H1 (cell line): ENCODE measurements at regions of chr21 and their contacts with region 1.

Region 1: DNA sequence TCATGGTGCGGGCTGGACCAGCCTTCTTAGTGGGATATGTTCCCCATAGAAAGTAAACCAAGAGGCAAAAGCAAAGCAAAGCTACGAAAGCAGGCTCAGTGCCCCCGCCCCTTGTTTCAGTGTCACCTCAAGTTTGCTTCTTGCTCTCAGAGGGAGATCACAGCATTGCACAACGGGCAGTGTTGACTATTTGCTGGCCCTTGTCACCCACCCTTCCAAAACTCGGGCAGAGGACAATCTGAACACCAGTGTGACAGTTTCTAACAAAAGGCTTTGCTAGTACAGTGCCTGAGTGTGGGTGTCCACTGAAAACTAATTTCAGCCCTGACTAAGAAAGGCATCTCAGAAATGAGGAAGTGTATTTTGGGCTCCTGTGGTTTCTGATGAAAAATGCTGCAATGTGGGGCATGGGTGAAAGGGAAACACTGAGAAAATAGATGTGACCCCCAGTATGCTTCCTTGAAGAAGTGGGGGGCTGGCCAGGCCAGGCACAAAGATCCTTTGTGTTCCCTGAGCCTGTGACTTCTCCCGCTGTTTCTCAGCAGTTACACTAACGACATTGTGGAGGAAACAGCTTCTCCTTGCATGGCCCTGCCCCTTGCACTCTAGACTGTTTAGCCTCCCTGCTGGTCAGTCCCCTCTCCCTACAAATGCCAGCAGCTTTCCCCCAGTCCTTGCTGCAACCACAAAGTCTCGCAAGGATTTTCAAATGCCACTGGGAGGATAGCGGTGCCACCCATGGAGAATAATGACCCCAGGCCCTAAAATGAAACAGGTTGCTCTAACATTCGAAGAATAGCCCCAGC is 33.3 kb upstream of the KCNE1 start:
- DNase-seq: no peak
- H3K4me3 ChIP-seq: no peak overlapping the region
- H3K27ac ChIP-seq: no peak overlapping the region
- H3K4me1 ChIP-seq: peaks cover 0 to 5% (median 2%) of the 10 kb centered on the region in 4 experiments; a peak in 4 of 7 replicates
- H3K27me3 ChIP-seq: no peaks in the 10 kb centered on the region; a peak in 1 of 7 replicates
- CTCF ChIP-seq: no peak
- EP300 ChIP-seq: no peak
- POLR2A ChIP-seq: no peak
- RAD21 ChIP-seq: no peak

Region 2: GRCh38 chr21:34517491-34518245 is 27.6 kb before region 1 on chr21:
- CTCF ChIA-PET with region 1: interaction called, 16 read pairs
- POLR2A ChIA-PET with region 1: no interaction called
- DNase-seq: no peak
- H3K4me3 ChIP-seq: no peak overlapping the region
- H3K27ac ChIP-seq: no peak overlapping the region
- H3K4me1 ChIP-seq: peaks cover 0 to 4% (median 0%) of the 10 kb centered on the region in 4 experiments; a peak in 2 of 7 replicates
- H3K27me3 ChIP-seq: no peaks in the 10 kb centered on the region
- CTCF ChIP-seq: peak; percentile 32 to 76 (median 63)
- EP300 ChIP-seq: no peak
- POLR2A ChIP-seq: no peak
- RAD21 ChIP-seq: peak; percentile 53 to 68

Region 3: DNA sequence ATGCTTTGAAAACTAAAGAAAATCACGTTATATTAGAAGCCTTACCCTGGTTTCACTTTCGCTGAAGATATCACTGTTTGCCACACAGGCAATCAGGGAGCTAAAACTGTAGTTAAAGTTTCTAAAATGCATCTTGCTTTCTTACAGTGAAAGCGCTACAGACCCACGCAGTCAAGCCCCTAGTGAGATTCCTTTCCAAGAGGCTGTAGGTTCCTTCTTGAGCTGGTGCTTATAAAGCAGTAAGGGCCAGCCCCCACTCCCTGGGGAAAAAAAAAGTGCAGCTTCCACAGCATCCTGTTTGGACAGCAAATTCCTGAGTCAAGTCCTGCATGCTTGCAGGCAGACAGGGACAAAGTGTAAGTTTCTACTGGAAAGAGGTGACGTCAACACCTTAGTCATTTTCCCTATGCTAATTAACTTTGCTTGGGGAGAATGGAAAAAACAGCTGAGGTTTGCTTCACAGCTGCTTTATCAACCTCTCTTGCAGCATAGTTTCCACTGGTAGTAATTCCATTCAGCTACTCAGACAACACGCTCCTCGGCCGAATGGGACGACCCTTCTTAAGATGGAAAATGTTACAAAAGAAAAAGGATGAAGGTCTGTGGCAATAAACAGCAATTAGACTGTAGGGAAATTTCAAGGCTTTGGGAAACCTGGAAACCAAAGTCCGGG is 18.5 kb before region 1 on chr21:
- CTCF ChIA-PET with region 1: interaction called, 16 read pairs
- POLR2A ChIA-PET with region 1: interaction called, 6 read pairs
- DNase-seq: no peak
- H3K4me3 ChIP-seq: no peak overlapping the region
- H3K27ac ChIP-seq: no peak overlapping the region
- H3K4me1 ChIP-seq: peaks cover 8 to 19% (median 14%) of the 10 kb centered on the region in 4 experiments
- H3K27me3 ChIP-seq: no peaks in the 10 kb centered on the region; a peak in 2 of 7 replicates
- CTCF ChIP-seq: no peak
- EP300 ChIP-seq: no peak
- POLR2A ChIP-seq: no peak
- RAD21 ChIP-seq: no peak

Region 4: GRCh38 chr21:34559089-34559631 is 13.9 kb after region 1 on chr21:
- CTCF ChIA-PET with region 1: interaction called, 12 read pairs
- POLR2A ChIA-PET with region 1: no interaction called
- DNase-seq: no peak
- H3K4me3 ChIP-seq: no peak overlapping the region
- H3K27ac ChIP-seq: no peak overlapping the region
- H3K4me1 ChIP-seq: no peaks in the 10 kb centered on the region
- H3K27me3 ChIP-seq: no peaks in the 10 kb centered on the region
- CTCF ChIP-seq: no peak
- EP300 ChIP-seq: no peak
- POLR2A ChIP-seq: no peak
- RAD21 ChIP-seq: no peak

Region 5: GRCh38 chr21:34702341-34703170 is 157.3 kb after region 1 on chr21:
- CTCF ChIA-PET with region 1: no interaction called
- POLR2A ChIA-PET with region 1: no interaction called
- DNase-seq: no peak
- H3K4me3 ChIP-seq: no peak overlapping the region
- H3K27ac ChIP-seq: no peak overlapping the region
- H3K4me1 ChIP-seq: no peaks in the 10 kb centered on the region; a peak in 2 of 7 replicates
- H3K27me3 ChIP-seq: no peaks in the 10 kb centered on the region
- CTCF ChIP-seq: no peak
- EP300 ChIP-seq: no peak
- POLR2A ChIP-seq: no peak
- RAD21 ChIP-seq: no peak

Region 6: DNA sequence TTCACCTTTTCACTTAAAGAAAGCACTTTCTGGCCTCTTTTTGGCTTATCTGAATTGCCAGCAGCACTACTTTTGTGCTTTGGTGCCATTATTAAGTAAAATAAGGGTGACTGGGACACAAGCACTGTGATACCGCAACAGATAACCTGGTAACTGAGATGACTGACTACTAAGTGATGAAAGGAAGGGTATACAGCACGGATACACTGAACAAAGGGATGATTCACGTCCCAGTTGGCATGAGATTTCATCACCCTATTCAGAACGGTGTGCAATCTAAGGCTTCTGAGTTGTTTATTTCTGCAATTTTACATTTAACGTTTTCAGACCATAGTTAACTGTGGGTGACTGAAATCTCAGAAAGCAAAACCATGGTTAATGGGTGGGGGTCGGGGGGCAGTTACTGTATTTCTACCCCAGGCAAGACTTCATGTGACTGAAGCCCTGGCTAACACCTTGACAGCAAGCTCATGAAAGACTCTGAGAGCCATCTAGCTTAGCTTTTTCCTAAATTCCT is 226.3 kb after region 1 on chr21:
- CTCF ChIA-PET with region 1: no interaction called
- POLR2A ChIA-PET with region 1: no interaction called
- DNase-seq: peak in 1 of 2 experiments; percentile 3
- H3K4me3 ChIP-seq: no peak overlapping the region
- H3K27ac ChIP-seq: no peak overlapping the region
- H3K4me1 ChIP-seq: no peaks in the 10 kb centered on the region
- H3K27me3 ChIP-seq: no peaks in the 10 kb centered on the region
- CTCF ChIP-seq: no peak
- EP300 ChIP-seq: no peak
- POLR2A ChIP-seq: no peak
- RAD21 ChIP-seq: no peak